ENCODE measurements at regions of chr7 and their contacts with region 1.

Region 1: GRCh38 chr7:27739909-27740448 is at the start of gene TAX1BP1:
- DNase-seq: peak; percentile 87
- ATAC-seq: peak; percentile 88
- H3K4me3 ChIP-seq: peak within 1 kb of the TSS; percentile 75 to 99
- H3K27ac ChIP-seq: peak within 1 kb of the TSS; percentile 73
- H3K4me1 ChIP-seq: peaks cover 11 to 18% of the 10 kb centered on the region in 2 experiments; a peak in 3 of 4 replicates
- H3K27me3 ChIP-seq: no peaks in the 10 kb centered on the region
- CTCF ChIP-seq: no peak
- POLR2A ChIP-seq: peak; percentile 94
- RAD21 ChIP-seq: no peak
- total RNA-seq, gene TAX1BP1: 68.1 TPM

Region 2: GRCh38 chr7:27662490-27663205 is 77.3 kb before region 1 on chr7 and contains the start of gene HIBADH:
- CTCF ChIA-PET with region 1: no interaction called
- POLR2A ChIA-PET with region 1: no interaction called
- RAD21 ChIA-PET with region 1: no interaction called
- intact Hi-C with region 1: loop called (anchors 1 kb)
- DNase-seq: peak; percentile 99
- ATAC-seq: peak; percentile 96
- H3K4me3 ChIP-seq: peak within 1 kb of the TSS; percentile 71 to 87
- H3K27ac ChIP-seq: peak within 1 kb of the TSS; percentile 79
- H3K4me1 ChIP-seq: peaks cover 14 to 22% of the 10 kb centered on the region in 2 experiments
- H3K27me3 ChIP-seq: no peaks in the 10 kb centered on the region
- CTCF ChIP-seq: no peak
- POLR2A ChIP-seq: no peak
- RAD21 ChIP-seq: no peak
- total RNA-seq, gene HIBADH: 32.4 TPM

Region 3: DNA sequence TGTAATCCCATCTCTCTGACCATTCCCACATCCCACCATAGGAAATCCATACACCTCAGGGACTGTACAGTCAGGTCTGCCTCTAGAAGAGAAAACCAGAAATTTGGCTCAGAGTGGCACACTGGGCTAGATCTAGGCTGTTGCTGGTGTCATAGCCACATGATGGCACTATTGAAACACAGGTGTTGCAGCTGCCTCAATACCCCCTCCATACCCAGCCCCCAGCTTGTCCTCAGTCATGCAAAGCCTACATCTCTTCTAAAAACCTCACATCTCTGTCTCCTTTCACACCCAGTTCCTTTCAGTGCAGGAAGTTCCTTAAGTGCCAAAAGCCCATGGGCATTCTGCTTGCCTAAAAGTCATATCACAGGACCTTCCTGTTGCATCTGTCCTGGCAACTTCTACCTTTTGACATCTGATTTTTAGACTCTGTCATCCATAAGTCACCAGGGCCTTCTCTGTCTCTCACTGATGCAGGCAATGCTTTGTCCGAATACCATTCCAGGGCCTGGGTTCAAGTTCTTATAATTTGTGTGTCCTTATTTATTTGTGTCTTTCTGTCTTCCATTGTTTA is 50.3 kb before region 1 on chr7:
- CTCF ChIA-PET with region 1: no interaction called
- POLR2A ChIA-PET with region 1: no interaction called
- RAD21 ChIA-PET with region 1: no interaction called
- intact Hi-C with region 1: loop called (anchors 5 kb)
- DNase-seq: no peak
- ATAC-seq: peak; percentile 95
- H3K4me3 ChIP-seq: no peak overlapping the region
- H3K27ac ChIP-seq: no peak overlapping the region
- H3K4me1 ChIP-seq: peaks cover 0 to 13% of the 10 kb centered on the region in 2 experiments; a peak in 2 of 4 replicates
- H3K27me3 ChIP-seq: no peaks in the 10 kb centered on the region
- CTCF ChIP-seq: peak; percentile 53 to 69 (median 66)
- POLR2A ChIP-seq: no peak
- RAD21 ChIP-seq: peak; percentile 85

Region 4: GRCh38 chr7:28329661-28330363 is 589.8 kb after region 1 on chr7:
- CTCF ChIA-PET with region 1: no interaction called
- POLR2A ChIA-PET with region 1: no interaction called
- RAD21 ChIA-PET with region 1: no interaction called
- intact Hi-C with region 1: no loop called
- DNase-seq: no peak
- ATAC-seq: no peak
- H3K4me3 ChIP-seq: no peak overlapping the region
- H3K27ac ChIP-seq: no peak overlapping the region
- H3K4me1 ChIP-seq: no peaks in the 10 kb centered on the region
- H3K27me3 ChIP-seq: peaks cover 5% of the 10 kb centered on the region; the same call in 1 of the 2 replicates
- CTCF ChIP-seq: no peak
- POLR2A ChIP-seq: no peak
- RAD21 ChIP-seq: no peak

Measured in HCT116 (cell line).